AG04449 (cell line): ENCODE measurements at regions of chr12 and their contacts with region 1.

Region 1: DNA sequence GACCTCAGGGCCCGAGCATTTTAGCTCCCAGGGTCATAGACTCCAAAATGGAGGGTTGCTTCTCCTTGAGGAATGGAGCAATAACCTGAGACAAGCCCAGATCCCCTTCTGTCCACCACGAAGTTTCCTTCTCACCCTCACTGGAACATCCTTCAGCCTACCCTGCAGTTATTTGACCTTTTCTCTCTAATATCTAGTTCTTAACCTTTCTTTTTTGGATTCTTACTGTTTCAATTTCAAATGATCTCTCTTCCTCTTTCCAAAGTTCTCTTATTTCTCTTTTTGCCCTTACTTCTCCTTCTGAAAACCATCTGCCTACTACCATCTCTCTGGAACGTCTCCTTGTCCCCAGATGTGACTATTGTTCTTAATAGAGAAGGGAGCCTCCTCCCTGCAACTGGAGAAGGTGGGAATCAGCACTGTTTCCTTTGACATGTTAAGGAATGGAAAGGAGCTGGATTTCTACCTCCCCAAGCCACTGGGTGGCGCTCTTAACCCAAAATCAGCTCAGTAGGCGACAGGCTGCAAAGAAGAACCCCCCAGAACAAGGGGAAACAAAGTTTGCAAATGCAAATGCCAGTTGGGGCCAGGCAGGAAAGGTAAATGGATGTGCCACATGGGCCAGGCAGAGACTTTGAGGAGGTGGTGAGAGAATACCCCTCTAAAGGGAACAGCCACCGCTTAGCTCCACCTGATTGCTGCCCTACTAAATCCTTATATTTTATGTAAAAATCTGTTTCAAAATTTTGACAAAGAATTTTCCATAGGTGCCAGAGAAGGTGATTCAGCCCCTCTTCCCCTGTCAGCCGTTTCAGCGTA is 22.4 kb upstream of the PDE1B start:
- DNase-seq: no peak
- H3K4me3 ChIP-seq: no peak overlapping the region
- CTCF ChIP-seq: peak; percentile 44

Region 2: GRCh38 chr12:54463034-54463433 is 64.0 kb before region 1 on chr12:
- CTCF ChIA-PET with region 1: no interaction called
- POLR2A ChIA-PET with region 1: no interaction called
- DNase-seq: no peak
- H3K4me3 ChIP-seq: no peak overlapping the region
- CTCF ChIP-seq: no peak

Region 3: GRCh38 chr12:54538136-54538700 is 11.2 kb after region 1 on chr12:
- CTCF ChIA-PET with region 1: interaction called, 12 read pairs
- POLR2A ChIA-PET with region 1: no interaction called
- DNase-seq: no peak
- H3K4me3 ChIP-seq: no peak overlapping the region
- CTCF ChIP-seq: no peak